PC-9 (cell line): ENCODE measurements at regions of chr16 and their contacts with region 1.

Region 1: GRCh38 chr16:12584488-12585223 is 219.0 kb downstream of the CPPED1 start:
- DNase-seq: peak; percentile 63 to 69
- H3K4me3 ChIP-seq: no peak overlapping the region
- H3K27ac ChIP-seq: no peak overlapping the region
- H3K4me1 ChIP-seq: no peaks in the 10 kb centered on the region; the same call in 1 of the 2 replicates
- H3K27me3 ChIP-seq: no peaks in the 10 kb centered on the region
- CTCF ChIP-seq: no peak

Region 2: DNA sequence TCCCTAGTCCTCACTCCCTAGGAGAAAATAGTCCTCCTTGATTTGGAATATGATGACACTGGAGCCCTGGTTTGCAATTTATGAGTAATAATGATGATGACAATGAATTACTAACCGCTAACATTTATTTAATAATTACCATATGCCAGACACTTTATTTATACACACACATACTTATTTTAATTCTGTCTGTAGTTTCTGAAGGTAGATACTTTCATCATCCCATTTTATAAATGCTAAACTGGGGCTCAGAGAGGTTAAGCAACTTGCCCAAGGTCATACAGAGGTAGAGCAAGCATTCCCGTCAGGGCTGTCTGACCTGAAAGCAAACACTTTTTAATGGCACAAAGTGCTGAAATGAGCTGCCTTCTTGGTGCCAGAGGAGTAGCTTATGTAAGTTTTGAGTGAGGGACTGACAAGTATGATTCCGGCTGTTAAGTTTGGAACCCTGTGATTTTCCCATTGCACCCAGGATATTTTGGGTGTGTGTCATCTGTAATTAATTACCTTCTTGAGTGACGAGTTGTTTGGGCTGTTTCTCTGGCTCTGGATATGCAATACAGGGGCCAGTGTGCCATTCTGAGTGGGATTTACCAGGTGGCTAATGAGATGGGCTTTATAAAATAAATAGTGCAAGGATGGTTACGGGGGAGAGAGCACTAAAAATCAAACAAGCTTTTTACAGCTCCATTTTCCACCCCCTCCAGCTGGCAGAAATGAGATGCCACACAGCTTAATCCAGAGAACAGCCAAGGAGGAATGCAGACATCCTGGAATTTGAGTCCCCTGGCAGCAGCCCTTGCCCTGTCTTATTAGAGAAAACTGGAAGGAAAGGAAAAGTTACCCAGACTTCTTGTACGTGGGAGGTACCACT is 396.4 kb before region 1 on chr16:
- CTCF ChIA-PET with region 1: no interaction called
- POLR2A ChIA-PET with region 1: no interaction called
- intact Hi-C with region 1: no loop called
- DNase-seq: peak; percentile 27 to 86
- H3K4me3 ChIP-seq: no peak overlapping the region
- H3K27ac ChIP-seq: peak overlapping the region; percentile 67
- H3K4me1 ChIP-seq: peaks cover 33% of the 10 kb centered on the region
- H3K27me3 ChIP-seq: no peaks in the 10 kb centered on the region
- CTCF ChIP-seq: no peak

Region 3: GRCh38 chr16:12613131-12613991 is 28.7 kb after region 1 on chr16:
- CTCF ChIA-PET with region 1: interaction called, 3 read pairs
- POLR2A ChIA-PET with region 1: interaction called, 3 read pairs
- intact Hi-C with region 1: loop called (anchors 2 kb)
- DNase-seq: peak; percentile 89 to 97
- H3K4me3 ChIP-seq: peak overlapping the region; percentile 46; the same call in 1 of the 2 replicates
- H3K27ac ChIP-seq: peak overlapping the region; percentile 100
- H3K4me1 ChIP-seq: peaks cover 55% of the 10 kb centered on the region
- H3K27me3 ChIP-seq: no peaks in the 10 kb centered on the region
- CTCF ChIP-seq: no peak

Region 4: DNA sequence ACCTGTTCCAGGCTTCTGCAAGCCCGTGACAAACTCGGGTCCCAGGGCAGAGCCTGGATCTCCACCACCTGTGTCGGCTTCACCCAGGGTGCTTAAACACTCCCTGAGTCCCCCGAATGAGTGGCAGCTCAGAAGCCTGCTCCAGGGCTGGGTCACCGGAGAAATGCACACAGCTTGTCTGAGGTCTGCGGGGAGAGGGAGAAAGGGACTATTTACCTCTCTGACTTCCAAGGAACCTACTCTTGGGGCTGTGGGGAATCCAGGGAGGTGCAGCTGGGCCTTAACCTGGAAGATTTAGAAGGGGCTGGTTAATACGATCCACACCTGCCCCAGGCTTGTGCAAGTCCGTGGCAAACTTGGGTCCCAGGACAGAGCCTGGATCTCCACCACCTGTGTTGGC is 46.0 kb after region 1 on chr16:
- CTCF ChIA-PET with region 1: no interaction called
- POLR2A ChIA-PET with region 1: no interaction called
- intact Hi-C with region 1: no loop called
- DNase-seq: no peak
- H3K4me3 ChIP-seq: no peak overlapping the region
- H3K27ac ChIP-seq: no peak overlapping the region
- H3K4me1 ChIP-seq: no peaks in the 10 kb centered on the region
- H3K27me3 ChIP-seq: no peaks in the 10 kb centered on the region
- CTCF ChIP-seq: no peak

Region 5: GRCh38 chr16:12646490-12647274 is 62.0 kb after region 1 on chr16:
- CTCF ChIA-PET with region 1: no interaction called
- POLR2A ChIA-PET with region 1: no interaction called
- intact Hi-C with region 1: loop called (anchors 10 kb)
- DNase-seq: peak in 1 of 2 experiments; percentile 58
- H3K4me3 ChIP-seq: no peak overlapping the region
- H3K27ac ChIP-seq: no peak overlapping the region
- H3K4me1 ChIP-seq: no peaks in the 10 kb centered on the region
- H3K27me3 ChIP-seq: no peaks in the 10 kb centered on the region
- CTCF ChIP-seq: no peak

Region 6: DNA sequence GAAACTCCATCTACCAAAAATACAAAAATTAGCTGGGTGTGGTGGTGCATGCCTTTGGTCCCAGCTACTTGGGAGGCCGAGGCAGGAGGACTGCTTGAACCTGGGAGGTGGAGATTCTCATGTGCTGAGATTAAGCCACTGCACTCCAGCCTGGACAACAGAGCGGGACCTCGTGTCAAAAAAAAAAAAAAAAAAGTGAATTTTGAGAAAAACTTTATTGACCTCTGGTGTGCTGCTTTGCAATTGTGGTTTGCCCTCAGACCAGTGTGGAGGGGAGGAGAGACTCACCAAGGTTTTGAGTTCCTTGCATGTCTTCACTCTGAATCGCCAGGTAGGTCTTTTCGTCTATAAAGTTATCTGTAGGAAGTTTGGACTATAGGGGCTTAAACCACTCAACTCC is 73.8 kb after region 1 on chr16:
- CTCF ChIA-PET with region 1: no interaction called
- POLR2A ChIA-PET with region 1: no interaction called
- intact Hi-C with region 1: no loop called
- DNase-seq: no peak
- H3K4me3 ChIP-seq: no peak overlapping the region
- H3K27ac ChIP-seq: no peak overlapping the region
- H3K4me1 ChIP-seq: no peaks in the 10 kb centered on the region
- H3K27me3 ChIP-seq: no peaks in the 10 kb centered on the region
- CTCF ChIP-seq: no peak